Kidney (tissue), 22 donors: ENCODE measurements at regions of chr17 and their contacts with region 1.

Region 1: GRCh38 chr17:52106638-52107261 is 51.8 kb downstream of the CA10 start:
- DNase-seq: peak in 4 of 5 donors; percentile 37 to 69 (median 54)
- H3K4me3 ChIP-seq: no peak overlapping the region
- H3K27ac ChIP-seq: no peak overlapping the region
- H3K4me1 ChIP-seq: no peaks in the 10 kb centered on the region
- H3K27me3 ChIP-seq: no peaks in the 10 kb centered on the region
- CTCF ChIP-seq: peak; percentile 63

Region 2: GRCh38 chr17:51764387-51764972 is 342.3 kb before region 1 on chr17:
- intact Hi-C with region 1: loop called (anchors 10 kb)
- DNase-seq: peak in 4 of 5 donors; percentile 61 to 84 (median 71)
- H3K4me3 ChIP-seq: no peak overlapping the region
- H3K27ac ChIP-seq: no peak overlapping the region
- H3K4me1 ChIP-seq: no peaks in the 10 kb centered on the region
- H3K27me3 ChIP-seq: no peaks in the 10 kb centered on the region
- CTCF ChIP-seq: peak; percentile 72